ENCODE measurements at regions of chr6 and their contacts with region 1.

Region 1: GRCh38 chr6:7589949-7590917 is at the start of gene SNRNP48:
- DNase-seq: peak; percentile 94 to 97 (median 95)
- H3K4me3 ChIP-seq: peak within 1 kb of the TSS; percentile 87
- H3K27ac ChIP-seq: peak within 1 kb of the TSS in 1 of 2 donors; percentile 81
- H3K4me1 ChIP-seq: peaks cover 7% of the 10 kb centered on the region
- H3K27me3 ChIP-seq: no peaks in the 10 kb centered on the region
- CTCF ChIP-seq: no peak
- EP300 ChIP-seq: no peak
- POLR2A ChIP-seq: peak; percentile 40
- total RNA-seq, gene SNRNP48: 8.6 to 19.6 (median 12.3) TPM

Region 2: GRCh38 chr6:7389451-7390225 is 200.6 kb before region 1 on chr6 and contains the starts of genes CAGE1 and RIOK1:
- intact Hi-C with region 1: loop called in 1 of 4 experiments (anchors 5 kb)
- DNase-seq: peak; percentile 91 to 96 (median 92)
- H3K4me3 ChIP-seq: peak within 1 kb of the TSS; percentile 51
- H3K27ac ChIP-seq: peak within 1 kb of the TSS; percentile 18 to 73
- H3K4me1 ChIP-seq: peaks cover 5% of the 10 kb centered on the region
- H3K27me3 ChIP-seq: no peaks in the 10 kb centered on the region
- CTCF ChIP-seq: no peak
- EP300 ChIP-seq: no peak
- POLR2A ChIP-seq: peak; percentile 65
- total RNA-seq, gene CAGE1: not detected
- total RNA-seq, gene RIOK1: 11.2 to 33.2 (median 18.5) TPM

Region 3: GRCh38 chr6:7414811-7415210 is 175.4 kb before region 1 on chr6:
- intact Hi-C with region 1: loop called in 1 of 4 experiments (anchors 5 kb)
- DNase-seq: no peak
- H3K4me3 ChIP-seq: no peak overlapping the region
- H3K27ac ChIP-seq: no peak overlapping the region
- H3K4me1 ChIP-seq: no peaks in the 10 kb centered on the region
- H3K27me3 ChIP-seq: no peaks in the 10 kb centered on the region
- CTCF ChIP-seq: no peak
- EP300 ChIP-seq: no peak
- POLR2A ChIP-seq: no peak